ENCODE measurements at regions of chr3 and their contacts with region 1.

Region 1: GRCh38 chr3:196108083-196108743 is 26.3 kb upstream of the TFRC start:
- DNase-seq: peak; percentile 69
- H3K4me3 Mint-ChIP-seq: no peak overlapping the region
- H3K27ac Mint-ChIP-seq: no peak overlapping the region
- H3K4me1 Mint-ChIP-seq: peaks cover 9% of the 10 kb centered on the region
- H3K27me3 Mint-ChIP-seq: no peaks in the 10 kb centered on the region
- CTCF ChIP-seq: no peak

Region 2: GRCh38 chr3:196136026-196136984 is 28.1 kb after region 1 on chr3:
- CTCF ChIA-PET with region 1: interaction called, 4 read pairs
- POLR2A ChIA-PET with region 1: interaction called, 19 read pairs
- intact Hi-C with region 1: no loop called
- DNase-seq: peak; percentile 91
- H3K4me3 Mint-ChIP-seq: peak overlapping the region; percentile 58
- H3K27ac Mint-ChIP-seq: peak overlapping the region; percentile 89
- H3K4me1 Mint-ChIP-seq: peaks cover 29% of the 10 kb centered on the region
- H3K27me3 Mint-ChIP-seq: no peaks in the 10 kb centered on the region
- CTCF ChIP-seq: no peak